HepG2 (cell line): ENCODE measurements at regions of chr6 and their contacts with region 1.

Region 1: GRCh38 chr6:111642463-111643158 is 36.9 kb upstream of the TRAF3IP2 start:
- DNase-seq: peak; percentile 80
- ATAC-seq: peak; percentile 89
- H3K4me3 ChIP-seq: 0 out of 6 replicates have a peak overlapping the region, but pooled peaks of 1 of the 3 experiments have one; percentile 4
- H3K27ac ChIP-seq: no peak overlapping the region
- H3K4me1 ChIP-seq: peaks cover 20% of the 10 kb centered on the region
- H3K27me3 ChIP-seq: no peaks in the 10 kb centered on the region
- CTCF ChIP-seq: peak; percentile 95
- EP300 ChIP-seq: no peak
- POLR2A ChIP-seq: no peak
- RAD21 ChIP-seq: peak; percentile 89

Region 2: GRCh38 chr6:111057074-111057752 is 585.4 kb before region 1 on chr6:
- CTCF ChIA-PET with region 1: no interaction called
- POLR2A ChIA-PET with region 1: no interaction called
- in situ Hi-C with region 1: loop called (anchors 25 kb)
- intact Hi-C with region 1: no loop called
- DNase-seq: peak; percentile 32
- ATAC-seq: peak; percentile 90
- H3K4me3 ChIP-seq: no peak overlapping the region
- H3K27ac ChIP-seq: no peak overlapping the region
- H3K4me1 ChIP-seq: peaks cover 3% of the 10 kb centered on the region
- H3K27me3 ChIP-seq: no peaks in the 10 kb centered on the region; a peak in 1 of 5 replicates
- CTCF ChIP-seq: peak; percentile 71
- EP300 ChIP-seq: no peak
- POLR2A ChIP-seq: no peak
- RAD21 ChIP-seq: peak; percentile 67

Region 3: DNA sequence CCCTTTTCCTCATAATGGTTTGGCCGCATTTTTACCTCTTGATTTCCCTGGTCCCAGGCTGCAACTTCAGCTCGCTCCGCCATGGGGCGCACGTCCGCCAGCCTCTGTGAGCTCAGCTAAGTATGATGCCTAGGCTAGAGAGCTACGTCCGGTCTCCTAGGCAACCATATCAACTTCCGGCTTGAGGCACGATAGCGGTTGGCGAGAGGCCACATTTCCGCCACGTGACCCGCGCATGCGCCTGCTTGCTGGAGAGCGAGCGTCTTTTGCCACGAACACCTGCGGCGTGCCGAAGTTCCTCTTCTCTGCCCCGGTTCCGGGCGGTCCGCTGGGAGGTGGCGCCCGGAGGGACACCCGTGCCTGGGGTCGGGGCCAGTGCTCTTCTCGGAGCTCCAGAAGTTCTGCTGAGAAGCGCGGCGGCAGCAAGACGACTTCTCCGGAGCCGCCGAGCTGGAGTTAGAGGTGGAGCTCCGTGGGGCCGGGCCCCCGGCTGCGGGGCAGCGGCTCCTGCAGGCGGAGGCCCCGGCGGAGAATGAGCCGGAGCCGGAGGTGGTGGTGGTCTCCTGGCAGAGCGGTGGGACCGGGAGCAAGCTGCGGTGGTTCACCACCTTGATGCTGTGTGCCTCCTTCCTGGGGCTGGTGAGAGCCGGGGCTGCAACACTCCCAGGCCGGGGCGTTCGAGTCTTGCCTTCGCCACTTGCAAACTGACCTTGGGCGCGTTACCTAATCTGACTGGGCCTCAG is 383.4 kb before region 1 on chr6:
- CTCF ChIA-PET with region 1: interaction called, 4 read pairs
- POLR2A ChIA-PET with region 1: interaction called, 7 read pairs
- in situ Hi-C with region 1: no loop called
- intact Hi-C with region 1: loop called (anchors 1 kb)
- DNase-seq: peak; percentile 98
- ATAC-seq: peak; percentile 95
- H3K4me3 ChIP-seq: peak overlapping the region; percentile 71 to 89 (median 86)
- H3K27ac ChIP-seq: peak overlapping the region; percentile 92
- H3K4me1 ChIP-seq: peaks cover 45% of the 10 kb centered on the region
- H3K27me3 ChIP-seq: no peaks in the 10 kb centered on the region
- CTCF ChIP-seq: peak; percentile 98
- EP300 ChIP-seq: peak in 1 of 2 experiments; percentile 33; a peak in 1 of 4 replicates
- POLR2A ChIP-seq: peak; percentile 69 to 91
- RAD21 ChIP-seq: peak; percentile 84

Region 4: GRCh38 chr6:111361648-111362047 is 281.0 kb before region 1 on chr6:
- CTCF ChIA-PET with region 1: interaction called, 10 read pairs
- POLR2A ChIA-PET with region 1: no interaction called
- in situ Hi-C with region 1: loop called (anchors 25 kb)
- intact Hi-C with region 1: loop called (anchors 1 kb)
- DNase-seq: peak; percentile 39
- ATAC-seq: peak; percentile 77
- H3K4me3 ChIP-seq: no peak overlapping the region
- H3K27ac ChIP-seq: no peak overlapping the region
- H3K4me1 ChIP-seq: peaks cover 11% of the 10 kb centered on the region
- H3K27me3 ChIP-seq: no peaks in the 10 kb centered on the region
- CTCF ChIP-seq: peak; percentile 44
- EP300 ChIP-seq: no peak
- POLR2A ChIP-seq: no peak
- RAD21 ChIP-seq: peak; percentile 40; the same call in 1 of the 2 replicates

Region 5: DNA sequence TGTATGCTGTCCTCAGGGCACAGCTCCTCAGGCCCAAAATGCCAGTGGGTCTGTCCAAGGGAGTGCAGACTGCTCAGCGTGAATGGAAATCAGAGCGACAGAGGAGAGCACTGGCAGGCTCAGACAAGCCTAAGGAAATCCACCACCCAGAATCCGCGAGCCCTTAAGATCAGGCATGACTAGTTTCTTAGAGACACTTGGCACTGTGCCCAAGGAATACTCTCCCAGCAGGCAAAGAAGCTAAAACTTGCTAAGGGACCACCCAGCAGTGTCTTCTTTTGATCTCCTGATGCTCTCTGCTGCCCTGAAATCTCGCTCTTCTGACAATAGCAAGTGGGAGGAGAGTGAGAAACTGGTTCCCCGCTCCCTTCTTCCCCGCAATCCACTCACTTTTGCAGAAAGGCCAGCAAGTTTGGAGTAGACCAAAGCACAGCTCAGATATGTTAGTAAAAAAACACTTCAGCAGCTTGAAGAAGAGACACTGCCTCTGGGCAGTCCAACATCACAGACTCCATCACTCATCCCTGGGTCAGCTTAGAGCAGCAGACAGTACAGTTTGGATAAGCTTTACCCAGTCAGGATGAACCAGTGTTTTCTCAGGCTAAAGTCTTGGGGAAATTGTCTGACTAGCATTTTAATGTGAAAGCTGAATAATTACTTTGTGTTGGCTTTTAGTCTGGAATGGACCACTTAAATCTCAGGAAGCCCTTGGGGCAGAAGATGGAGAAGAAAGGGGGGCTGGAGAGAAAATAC is 69.3 kb before region 1 on chr6:
- CTCF ChIA-PET with region 1: no interaction called
- POLR2A ChIA-PET with region 1: interaction called, 3 read pairs
- in situ Hi-C with region 1: no loop called
- intact Hi-C with region 1: loop called (anchors 1 kb)
- DNase-seq: no peak
- ATAC-seq: no peak
- H3K4me3 ChIP-seq: no peak overlapping the region
- H3K27ac ChIP-seq: peak overlapping the region; percentile 74
- H3K4me1 ChIP-seq: peaks cover 26% of the 10 kb centered on the region
- H3K27me3 ChIP-seq: no peaks in the 10 kb centered on the region
- CTCF ChIP-seq: no peak
- EP300 ChIP-seq: no peak
- POLR2A ChIP-seq: no peak
- RAD21 ChIP-seq: no peak

Region 6: DNA sequence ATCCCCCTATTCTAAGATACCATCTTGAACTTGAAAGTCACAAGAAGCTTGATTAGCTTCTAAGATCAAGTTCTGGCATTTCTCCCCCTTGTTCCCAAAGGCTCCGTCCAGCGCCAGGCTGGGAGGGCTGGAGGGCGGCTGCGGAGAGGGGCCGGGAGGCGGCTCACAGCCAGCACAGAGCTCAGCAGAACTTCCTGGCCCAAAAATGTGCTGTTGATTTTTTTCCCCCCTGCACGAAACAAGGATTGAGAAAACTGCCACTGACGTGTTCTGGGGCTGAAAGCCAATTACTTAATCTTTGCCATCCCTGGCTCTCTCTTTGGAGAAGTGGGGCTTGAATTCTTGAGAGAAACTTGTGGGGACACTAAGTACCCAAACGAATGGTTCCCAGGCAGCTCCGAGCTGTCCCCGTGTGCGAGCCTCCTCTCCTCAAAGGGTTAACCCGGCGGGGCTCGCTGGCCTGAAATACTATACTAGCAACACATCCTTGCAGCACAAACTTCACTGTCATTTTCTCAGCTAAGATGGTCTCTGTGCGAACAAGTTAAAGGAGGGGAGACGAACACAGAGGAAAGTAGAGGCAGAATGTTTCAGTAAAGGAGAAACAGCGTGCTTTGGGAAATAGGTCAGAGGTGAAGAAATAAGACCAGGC is 37.4 kb before region 1 on chr6:
- CTCF ChIA-PET with region 1: no interaction called
- POLR2A ChIA-PET with region 1: no interaction called
- in situ Hi-C with region 1: no loop called
- intact Hi-C with region 1: loop called (anchors 5 kb)
- DNase-seq: no peak
- ATAC-seq: peak; percentile 45
- H3K4me3 ChIP-seq: peak overlapping the region; percentile 72 to 93 (median 82)
- H3K27ac ChIP-seq: peak overlapping the region; percentile 66
- H3K4me1 ChIP-seq: peaks cover 78% of the 10 kb centered on the region
- H3K27me3 ChIP-seq: no peaks in the 10 kb centered on the region; a peak in 1 of 5 replicates
- CTCF ChIP-seq: no peak
- EP300 ChIP-seq: no peak
- POLR2A ChIP-seq: no peak
- RAD21 ChIP-seq: no peak

Region 7: GRCh38 chr6:111615916-111616612 is 26.5 kb before region 1 on chr6:
- CTCF ChIA-PET with region 1: no interaction called
- POLR2A ChIA-PET with region 1: no interaction called
- in situ Hi-C with region 1: no loop called
- intact Hi-C with region 1: no loop called
- DNase-seq: peak; percentile 45
- ATAC-seq: peak; percentile 37
- H3K4me3 ChIP-seq: no peak overlapping the region
- H3K27ac ChIP-seq: no peak overlapping the region
- H3K4me1 ChIP-seq: peaks cover 63% of the 10 kb centered on the region
- H3K27me3 ChIP-seq: no peaks in the 10 kb centered on the region; a peak in 1 of 5 replicates
- CTCF ChIP-seq: no peak
- EP300 ChIP-seq: no peak
- POLR2A ChIP-seq: no peak
- RAD21 ChIP-seq: no peak

Region 8: DNA sequence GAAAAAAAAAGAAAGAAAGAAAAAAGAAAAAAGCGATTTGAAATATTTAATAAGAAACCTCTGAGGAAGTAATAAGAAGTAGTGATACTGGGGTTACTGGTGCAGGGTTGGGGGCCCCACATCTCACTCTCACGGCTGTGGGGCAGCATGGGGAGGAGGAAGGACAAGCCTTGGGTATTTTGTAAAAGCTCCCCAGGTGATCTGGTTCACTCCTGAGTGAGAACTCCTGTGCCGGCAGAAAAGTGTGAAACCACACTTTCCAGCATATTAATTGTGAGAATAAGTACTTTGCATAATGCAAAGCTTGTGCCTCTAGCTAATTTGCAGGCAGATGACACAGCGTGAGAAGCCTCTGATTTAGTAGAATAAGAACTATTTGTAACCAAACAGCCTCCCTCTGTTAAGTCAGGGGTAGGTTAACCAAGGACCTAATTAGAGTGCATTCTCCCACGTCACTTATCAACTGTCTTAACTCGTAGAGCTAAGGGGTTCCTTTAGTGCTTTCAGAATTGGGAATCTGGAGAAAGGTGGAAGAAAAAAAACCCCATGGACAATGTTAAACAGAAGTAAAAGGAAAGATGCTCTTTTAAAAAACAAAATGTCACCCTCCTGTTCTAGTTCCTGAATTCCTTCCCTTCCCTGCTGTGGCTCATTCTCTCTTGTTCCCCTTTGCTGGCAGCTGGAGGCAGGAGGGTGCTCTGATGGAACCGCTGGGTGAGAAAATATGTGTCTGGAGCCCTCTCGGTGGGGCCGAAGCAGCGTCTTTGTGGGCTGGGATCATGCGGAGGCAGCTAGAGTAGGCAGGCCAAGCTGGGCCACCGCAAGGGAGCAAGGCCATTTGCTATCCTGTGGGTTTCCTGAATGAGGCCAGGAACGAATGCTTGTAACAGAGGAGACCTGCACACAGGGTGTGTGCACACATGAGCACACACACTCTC is 121.9 kb after region 1 on chr6:
- CTCF ChIA-PET with region 1: no interaction called
- POLR2A ChIA-PET with region 1: no interaction called
- in situ Hi-C with region 1: no loop called
- intact Hi-C with region 1: no loop called
- DNase-seq: no peak
- ATAC-seq: no peak
- H3K4me3 ChIP-seq: no peak overlapping the region
- H3K27ac ChIP-seq: no peak overlapping the region
- H3K4me1 ChIP-seq: no peaks in the 10 kb centered on the region
- H3K27me3 ChIP-seq: no peaks in the 10 kb centered on the region
- CTCF ChIP-seq: no peak
- EP300 ChIP-seq: no peak
- POLR2A ChIP-seq: no peak
- RAD21 ChIP-seq: no peak

Region 9: DNA sequence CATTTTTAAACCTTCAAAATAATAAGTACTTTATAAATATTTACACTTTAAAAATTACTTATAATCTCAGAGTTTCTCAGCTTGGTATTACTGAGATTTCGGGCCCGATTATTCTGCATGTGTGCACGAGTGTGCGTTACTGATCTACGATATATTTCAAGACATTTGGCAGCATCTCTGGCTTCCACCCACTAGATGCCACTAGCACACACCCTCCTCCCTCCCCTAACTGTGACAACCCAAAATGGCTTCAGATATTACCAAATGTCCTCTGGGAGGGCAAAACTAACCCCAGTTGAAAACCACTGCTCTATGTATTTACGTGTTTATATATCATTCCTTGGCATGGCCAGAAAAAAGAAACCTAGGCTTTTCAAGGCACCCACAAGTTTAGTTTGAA is 134.7 kb after region 1 on chr6:
- CTCF ChIA-PET with region 1: no interaction called
- POLR2A ChIA-PET with region 1: no interaction called
- in situ Hi-C with region 1: no loop called
- intact Hi-C with region 1: no loop called
- DNase-seq: no peak
- ATAC-seq: peak; percentile 43; the same call in 1 of the 3 replicates
- H3K4me3 ChIP-seq: no peak overlapping the region
- H3K27ac ChIP-seq: no peak overlapping the region
- H3K4me1 ChIP-seq: no peaks in the 10 kb centered on the region
- H3K27me3 ChIP-seq: no peaks in the 10 kb centered on the region
- CTCF ChIP-seq: 0 out of 2 replicates have a peak, but pooled peaks have one; percentile 10
- EP300 ChIP-seq: no peak
- POLR2A ChIP-seq: no peak
- RAD21 ChIP-seq: no peak

Region 10: GRCh38 chr6:111873178-111874024 is 230.8 kb after region 1 on chr6 and contains the start of gene FYN:
- CTCF ChIA-PET with region 1: no interaction called
- POLR2A ChIA-PET with region 1: no interaction called
- in situ Hi-C with region 1: no loop called
- intact Hi-C with region 1: no loop called
- DNase-seq: peak; percentile 92
- ATAC-seq: peak; percentile 99
- H3K4me3 ChIP-seq: peak within 1 kb of the TSS; percentile 66 to 82 (median 68)
- H3K27ac ChIP-seq: no peak within 1 kb of the TSS
- H3K4me1 ChIP-seq: peaks cover 40% of the 10 kb centered on the region
- H3K27me3 ChIP-seq: peaks cover 0 to 21% of the 10 kb centered on the region in 2 experiments; a peak in 4 of 5 replicates
- CTCF ChIP-seq: peak; percentile 47
- EP300 ChIP-seq: no peak
- POLR2A ChIP-seq: no peak; a peak in 1 of 4 replicates
- RAD21 ChIP-seq: peak; percentile 56; the same call in 1 of the 2 replicates
- total RNA-seq, gene FYN: 14.6 and 15.5 TPM in 2 replicates